Dendritic cell treated with granulocyte-macrophage colony-stimulating factor and Interleukin-4, amounts not matched to agents 40 ng/mL and 50 ng/mL, for 4 days (primary cell): ENCODE measurements at regions of chr7 and their contacts with region 1.

Region 1: GRCh38 chr7:25259587-25260243 is 31.4 kb upstream of the NPVF start:
- H3K4me3 Mint-ChIP-seq: no peak overlapping the region
- H3K27ac Mint-ChIP-seq: no peak overlapping the region
- H3K4me1 Mint-ChIP-seq: peaks cover 18% of the 10 kb centered on the region
- H3K27me3 Mint-ChIP-seq: peaks cover 31% of the 10 kb centered on the region

Region 2: GRCh38 chr7:25389489-25390106 is 129.9 kb after region 1 on chr7:
- intact Hi-C with region 1: loop called (anchors 1 kb)
- H3K4me3 Mint-ChIP-seq: no peak overlapping the region
- H3K27ac Mint-ChIP-seq: no peak overlapping the region
- H3K4me1 Mint-ChIP-seq: no peaks in the 10 kb centered on the region
- H3K27me3 Mint-ChIP-seq: peaks cover 16% of the 10 kb centered on the region

Region 3: GRCh38 chr7:25565949-25566348 is 306.2 kb after region 1 on chr7:
- intact Hi-C with region 1: loop called (anchors 1 kb)
- H3K4me3 Mint-ChIP-seq: no peak overlapping the region
- H3K27ac Mint-ChIP-seq: no peak overlapping the region
- H3K4me1 Mint-ChIP-seq: no peaks in the 10 kb centered on the region
- H3K27me3 Mint-ChIP-seq: peaks cover 4% of the 10 kb centered on the region

Region 4: GRCh38 chr7:25851332-25852210 is 591.9 kb after region 1 on chr7:
- intact Hi-C with region 1: loop called (anchors 2 kb)
- H3K4me3 Mint-ChIP-seq: peak overlapping the region; percentile 72
- H3K27ac Mint-ChIP-seq: no peak overlapping the region
- H3K4me1 Mint-ChIP-seq: peaks cover 10% of the 10 kb centered on the region
- H3K27me3 Mint-ChIP-seq: peaks cover 70% of the 10 kb centered on the region

Region 5: DNA sequence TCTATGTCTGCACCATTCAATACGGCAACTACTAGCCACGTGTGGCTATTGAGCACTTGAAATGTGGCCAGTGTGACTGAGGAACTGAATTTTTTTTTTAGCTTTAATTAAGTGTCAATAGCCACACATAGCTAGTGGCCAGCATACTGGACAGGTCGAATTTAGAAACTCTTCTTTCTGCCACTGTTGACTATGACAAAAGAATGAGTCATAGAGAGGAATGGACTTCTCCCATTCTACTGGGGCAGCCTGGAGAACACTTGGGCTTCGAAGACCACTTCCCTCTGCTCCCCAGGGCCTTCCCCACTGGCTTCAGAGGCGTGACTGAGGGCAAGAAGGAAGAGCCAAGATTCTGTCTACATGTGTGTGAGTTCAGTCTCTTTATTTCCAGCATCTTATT is 1169.5 kb after region 1 on chr7:
- intact Hi-C with region 1: no loop called
- H3K4me3 Mint-ChIP-seq: no peak overlapping the region
- H3K27ac Mint-ChIP-seq: no peak overlapping the region
- H3K4me1 Mint-ChIP-seq: no peaks in the 10 kb centered on the region
- H3K27me3 Mint-ChIP-seq: peaks cover 2% of the 10 kb centered on the region